Activated naive CD4-positive, alpha-beta T cell treated with anti-CD3 and anti-CD28 coated beads for 36 hours (primary cell): ENCODE measurements at regions of chr7 and their contacts with region 1.

Region 1: GRCh38 chr7:5665094-5666025 is 116.1 kb downstream of the RNF216 start:
- DNase-seq: peak; percentile 82
- H3K4me3 Mint-ChIP-seq: no peak overlapping the region
- H3K27ac Mint-ChIP-seq: no peak overlapping the region
- H3K4me1 Mint-ChIP-seq: peaks cover 11% of the 10 kb centered on the region
- H3K27me3 Mint-ChIP-seq: no peaks in the 10 kb centered on the region

Region 2: DNA sequence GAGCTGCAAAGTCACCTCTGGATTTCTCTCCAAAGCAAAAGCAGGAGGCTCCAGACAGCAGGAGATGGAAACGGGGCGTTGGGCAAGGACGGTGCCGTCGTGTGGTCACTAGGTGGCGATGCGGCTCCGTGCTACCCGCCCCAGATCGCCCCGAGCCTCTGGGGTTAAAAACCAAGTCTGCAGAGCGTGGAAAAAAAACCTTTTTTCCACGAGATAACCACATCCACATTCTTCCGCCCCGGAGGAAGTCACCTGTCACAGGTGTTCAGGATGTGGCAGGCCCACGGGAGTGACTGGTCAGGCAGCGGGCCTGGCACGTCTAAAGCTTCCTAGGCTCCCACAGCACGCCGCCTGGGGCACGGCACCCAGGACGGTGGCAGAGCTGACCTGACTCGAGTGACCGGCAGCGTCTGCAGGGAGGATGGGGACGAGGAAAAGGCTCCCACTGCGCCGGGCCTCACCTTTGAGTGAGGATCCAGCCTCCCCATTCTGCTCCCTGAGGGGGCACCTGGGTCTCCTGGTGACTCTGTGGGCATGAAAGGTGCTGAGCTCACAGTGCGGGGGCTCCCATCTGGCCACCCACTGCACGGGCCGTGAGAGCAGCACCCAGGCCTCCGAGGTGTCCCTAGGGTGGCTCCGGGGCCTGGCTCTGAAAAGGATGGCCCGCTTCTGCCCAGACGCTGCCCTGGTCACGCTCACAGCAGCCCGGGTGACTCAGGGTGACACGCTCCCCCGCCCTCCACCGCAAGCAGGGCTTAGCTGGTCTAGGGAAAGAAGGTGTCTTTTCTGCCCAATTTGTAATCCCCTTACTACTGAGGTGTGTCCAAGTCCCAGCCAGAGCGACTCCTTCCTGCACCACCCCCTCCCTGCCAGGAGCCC is 170.4 kb before region 1 on chr7:
- CTCF ChIA-PET with region 1: interaction called, 34 read pairs
- intact Hi-C with region 1: loop called (anchors 1 kb)
- DNase-seq: peak; percentile 88
- H3K4me3 Mint-ChIP-seq: no peak overlapping the region
- H3K27ac Mint-ChIP-seq: no peak overlapping the region
- H3K4me1 Mint-ChIP-seq: peaks cover 26% of the 10 kb centered on the region
- H3K27me3 Mint-ChIP-seq: no peaks in the 10 kb centered on the region

Region 3: GRCh38 chr7:5596046-5596895 is 69.1 kb before region 1 on chr7:
- CTCF ChIA-PET with region 1: no interaction called
- intact Hi-C with region 1: loop called (anchors 1 kb)
- DNase-seq: peak; percentile 93
- H3K4me3 Mint-ChIP-seq: peak overlapping the region; percentile 67
- H3K27ac Mint-ChIP-seq: peak overlapping the region; percentile 72
- H3K4me1 Mint-ChIP-seq: peaks cover 22% of the 10 kb centered on the region
- H3K27me3 Mint-ChIP-seq: peaks cover 20% of the 10 kb centered on the region

Region 4: DNA sequence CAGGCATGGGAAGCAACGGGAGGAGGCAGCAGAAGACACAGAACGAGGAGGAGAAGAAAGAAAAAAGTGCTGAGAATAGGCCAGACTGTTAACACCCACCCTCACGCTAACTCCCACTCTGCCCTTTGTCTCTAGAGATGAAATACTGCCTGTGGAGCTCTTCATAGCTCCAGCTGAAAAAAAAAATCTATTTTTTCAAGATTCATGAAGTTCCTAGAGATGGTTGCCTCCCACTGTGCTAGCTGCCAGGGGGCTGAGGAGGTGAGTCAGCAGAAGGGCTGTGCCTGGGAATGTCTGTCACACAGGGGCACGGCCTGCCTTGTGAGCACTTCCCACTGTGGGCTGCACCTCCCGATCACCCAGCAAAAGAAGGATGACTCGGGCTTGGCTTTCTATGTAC is 28.4 kb before region 1 on chr7:
- CTCF ChIA-PET with region 1: interaction called, 6 read pairs
- intact Hi-C with region 1: loop called (anchors 5 kb)
- DNase-seq: no peak
- H3K4me3 Mint-ChIP-seq: no peak overlapping the region
- H3K27ac Mint-ChIP-seq: no peak overlapping the region
- H3K4me1 Mint-ChIP-seq: peaks cover 8% of the 10 kb centered on the region
- H3K27me3 Mint-ChIP-seq: no peaks in the 10 kb centered on the region

Region 5: DNA sequence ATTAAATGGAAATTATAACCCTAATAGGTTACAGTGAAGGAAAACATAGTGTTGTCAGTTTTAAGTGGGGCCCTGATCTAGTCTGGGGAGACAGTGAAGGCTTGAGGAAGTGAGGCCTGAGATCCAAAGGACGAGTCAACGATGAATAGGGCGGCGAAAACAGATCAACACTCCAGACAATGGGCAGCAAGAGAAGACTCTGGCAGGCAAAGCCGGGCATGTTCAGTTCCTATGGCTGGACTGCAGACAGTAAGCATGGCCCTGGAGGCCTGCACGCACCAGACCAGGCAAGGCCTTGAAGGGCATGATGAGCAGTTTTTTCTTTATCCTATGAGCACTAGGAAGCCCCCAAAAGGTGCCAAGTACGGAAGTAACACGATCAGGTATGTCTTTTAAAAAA is 11.7 kb before region 1 on chr7:
- CTCF ChIA-PET with region 1: interaction called, 21 read pairs
- intact Hi-C with region 1: no loop called
- DNase-seq: no peak
- H3K4me3 Mint-ChIP-seq: no peak overlapping the region
- H3K27ac Mint-ChIP-seq: peak overlapping the region; percentile 25
- H3K4me1 Mint-ChIP-seq: peaks cover 2% of the 10 kb centered on the region
- H3K27me3 Mint-ChIP-seq: no peaks in the 10 kb centered on the region

Region 6: DNA sequence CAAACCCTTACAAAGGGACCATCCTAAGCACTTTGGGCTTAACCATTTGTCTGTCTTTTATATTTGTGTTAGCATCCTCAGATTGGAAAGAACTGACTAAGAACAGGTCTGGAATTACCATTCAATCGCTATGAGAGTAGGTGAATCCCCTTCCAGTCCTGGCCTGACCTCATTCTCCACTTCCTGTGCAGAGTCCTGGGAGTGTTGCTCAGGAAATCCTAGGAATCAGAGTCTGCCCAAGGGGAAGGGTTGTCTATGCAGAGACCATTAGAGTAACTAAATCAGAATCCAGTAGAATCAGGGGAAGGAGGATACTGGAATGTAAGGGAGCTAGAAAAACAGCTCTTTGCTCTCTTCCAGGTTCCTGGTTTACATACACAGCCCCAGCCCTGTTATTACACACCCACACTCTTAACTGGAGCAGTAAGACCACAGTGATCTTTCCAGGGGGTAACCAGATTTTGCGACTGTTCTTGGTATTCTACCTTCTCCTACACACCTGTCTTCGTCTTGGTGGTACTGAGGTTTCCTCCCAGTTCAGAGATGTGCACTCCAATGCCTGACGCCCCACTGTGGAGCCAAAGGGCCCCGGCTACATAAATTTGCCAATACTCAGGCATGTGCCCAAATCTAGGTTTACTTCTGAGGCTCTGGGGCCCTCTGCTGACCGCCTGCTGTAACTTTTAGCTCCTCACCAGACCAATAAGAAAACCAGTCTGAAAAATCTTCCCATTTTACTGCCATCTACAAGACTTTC is 12.4 kb after region 1 on chr7:
- CTCF ChIA-PET with region 1: interaction called, 26 read pairs
- intact Hi-C with region 1: no loop called
- DNase-seq: peak; percentile 74
- H3K4me3 Mint-ChIP-seq: no peak overlapping the region
- H3K27ac Mint-ChIP-seq: peak overlapping the region; percentile 3
- H3K4me1 Mint-ChIP-seq: peaks cover 50% of the 10 kb centered on the region
- H3K27me3 Mint-ChIP-seq: no peaks in the 10 kb centered on the region

Region 7: DNA sequence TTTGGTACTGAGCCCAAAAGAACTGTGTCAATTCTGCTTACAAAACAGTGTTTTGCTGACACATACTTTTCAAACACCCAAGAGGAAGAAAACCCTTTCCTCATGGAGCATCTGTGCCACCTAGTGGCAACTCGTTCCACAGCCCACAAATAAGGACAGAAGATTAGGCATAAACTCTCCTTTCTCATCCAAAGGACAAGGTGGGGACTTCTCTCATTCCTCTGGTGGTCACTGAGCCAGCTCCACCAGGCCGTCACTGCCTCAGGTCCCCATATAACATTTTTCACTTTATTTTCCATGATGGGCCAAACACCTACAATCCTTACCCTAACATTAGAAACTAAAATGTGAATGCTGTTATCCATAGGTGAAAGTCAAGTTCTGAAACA is 39.2 kb after region 1 on chr7:
- CTCF ChIA-PET with region 1: interaction called, 30 read pairs
- intact Hi-C with region 1: loop called (anchors 1 kb)
- DNase-seq: peak; percentile 92
- H3K4me3 Mint-ChIP-seq: no peak overlapping the region
- H3K27ac Mint-ChIP-seq: no peak overlapping the region
- H3K4me1 Mint-ChIP-seq: peaks cover 75% of the 10 kb centered on the region
- H3K27me3 Mint-ChIP-seq: no peaks in the 10 kb centered on the region